HAP-1 (cell line): ENCODE measurements at regions of chr20 and their contacts with region 1.

Region 1: DNA sequence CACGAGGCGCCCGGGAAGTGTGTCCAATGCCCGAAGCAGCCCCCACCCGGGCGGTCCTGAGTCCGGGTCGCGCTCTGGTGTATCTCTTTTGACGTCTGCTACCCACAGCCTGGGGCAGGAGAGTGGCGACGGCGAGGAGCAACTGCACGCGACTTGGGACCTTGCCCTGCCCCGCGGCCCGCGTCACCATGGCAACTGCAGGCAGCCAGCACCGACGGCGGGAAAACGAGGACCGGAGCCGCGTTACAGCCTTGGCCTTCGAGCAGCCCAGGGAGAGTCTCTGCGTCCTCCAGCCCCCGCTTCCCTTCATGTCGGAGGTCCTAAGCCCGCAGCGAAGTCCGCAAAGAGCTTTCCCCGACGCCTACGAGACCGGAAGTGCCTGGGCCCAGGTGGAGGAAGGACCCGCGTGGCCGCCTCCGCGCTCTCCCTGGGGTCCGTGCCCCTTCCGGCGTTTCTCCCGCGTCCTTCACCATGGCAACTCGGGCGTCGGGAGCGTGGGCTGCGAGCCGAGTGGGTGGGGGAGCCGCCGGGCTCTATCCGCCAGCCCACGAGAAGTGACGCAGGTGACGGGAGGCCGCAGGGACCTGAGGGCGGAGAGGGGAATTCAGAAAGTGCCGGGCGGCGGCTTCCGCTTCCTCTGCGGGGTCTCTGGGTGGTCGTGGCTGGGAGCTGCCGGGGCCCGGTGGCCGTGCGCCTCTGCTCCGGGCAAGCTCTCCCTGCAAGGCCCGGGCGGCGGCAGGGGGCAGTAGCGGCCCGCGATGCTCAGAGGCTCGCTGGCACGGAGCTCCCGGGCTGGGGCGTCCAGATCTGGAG is 88.6 kb upstream of the TGM3 start:
- DNase-seq: peak; percentile 39 to 82
- H3K4me3 ChIP-seq: peak overlapping the region; percentile 38
- H3K4me1 ChIP-seq: no peaks in the 10 kb centered on the region
- H3K27me3 ChIP-seq: peaks cover 13% of the 10 kb centered on the region

Region 2: GRCh38 chr20:2446845-2447244 is 239.7 kb after region 1 on chr20:
- in situ Hi-C with region 1: loop called (anchors 25 kb)
- DNase-seq: peak in 1 of 2 experiments; percentile 36
- H3K4me3 ChIP-seq: no peak overlapping the region
- H3K4me1 ChIP-seq: no peaks in the 10 kb centered on the region
- H3K27me3 ChIP-seq: no peaks in the 10 kb centered on the region